ENCODE measurements at regions of chr18 and their contacts with region 1.

Region 1: GRCh38 chr18:5744659-5745058 is 150.7 kb downstream of the TMEM200C start:
- DNase-seq: no peak
- H3K4me3 ChIP-seq: no peak overlapping the region
- H3K27ac ChIP-seq: no peak overlapping the region
- H3K4me1 ChIP-seq: no peaks in the 10 kb centered on the region
- H3K27me3 ChIP-seq: no peaks in the 10 kb centered on the region
- CTCF ChIP-seq: no peak
- EP300 ChIP-seq: no peak
- POLR2A ChIP-seq: no peak

Region 2: GRCh38 chr18:5787936-5788335 is 43.3 kb after region 1 on chr18:
- intact Hi-C with region 1: loop called (anchors 5 kb)
- DNase-seq: no peak
- H3K4me3 ChIP-seq: no peak overlapping the region
- H3K27ac ChIP-seq: no peak overlapping the region
- H3K4me1 ChIP-seq: no peaks in the 10 kb centered on the region
- H3K27me3 ChIP-seq: no peaks in the 10 kb centered on the region
- CTCF ChIP-seq: no peak
- EP300 ChIP-seq: no peak
- POLR2A ChIP-seq: no peak

Region 3: GRCh38 chr18:6132751-6133368 is 388.2 kb after region 1 on chr18:
- intact Hi-C with region 1: no loop called
- DNase-seq: no peak
- H3K4me3 ChIP-seq: no peak overlapping the region
- H3K27ac ChIP-seq: no peak overlapping the region
- H3K4me1 ChIP-seq: no peaks in the 10 kb centered on the region
- H3K27me3 ChIP-seq: no peaks in the 10 kb centered on the region
- CTCF ChIP-seq: no peak
- EP300 ChIP-seq: no peak
- POLR2A ChIP-seq: no peak